ENCODE measurements at regions of chr17 and their contacts with region 1.

Region 1: GRCh38 chr17:13230350-13231264 is 212.8 kb upstream of the ELAC2 start:
- DNase-seq: peak; percentile 34
- H3K4me3 ChIP-seq: no peak overlapping the region
- H3K27ac ChIP-seq: no peak overlapping the region
- H3K4me1 ChIP-seq: no peaks in the 10 kb centered on the region
- H3K27me3 ChIP-seq: no peaks in the 10 kb centered on the region
- CTCF ChIP-seq: no peak

Region 2: DNA sequence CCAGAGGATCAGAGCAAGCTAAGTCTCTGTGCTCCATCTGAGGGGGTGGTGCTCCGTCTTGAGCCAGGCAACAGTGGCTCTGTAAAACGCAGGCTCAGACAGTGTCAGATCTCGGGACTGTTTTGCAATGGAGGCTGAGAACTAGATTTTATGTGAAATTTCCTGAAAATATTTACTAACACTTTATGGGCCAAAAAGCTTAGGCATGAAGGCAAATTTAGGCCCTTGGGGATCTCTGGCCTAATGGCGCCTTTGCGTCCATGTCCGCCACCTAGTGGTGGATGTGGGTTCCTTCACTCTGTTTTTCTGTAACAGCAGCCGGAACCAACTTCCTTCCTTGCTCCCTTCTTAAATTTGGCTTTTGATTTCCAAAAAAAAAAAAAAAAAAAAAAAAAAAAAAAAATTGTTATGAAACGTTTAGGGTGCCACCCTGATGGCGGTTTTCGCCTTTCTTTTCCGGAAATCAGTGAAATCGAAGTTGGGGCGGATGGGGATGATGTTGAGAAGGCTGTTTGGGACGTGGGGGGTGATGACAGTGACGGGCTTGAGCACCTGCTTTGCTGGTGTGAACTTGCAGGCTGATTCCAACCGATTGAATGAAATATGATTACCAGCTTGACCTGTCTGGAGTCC is 198.8 kb before region 1 on chr17:
- CTCF ChIA-PET with region 1: no interaction called
- dilution Hi-C with region 1: no loop called
- in situ Hi-C with region 1: no loop called
- intact Hi-C with region 1: loop called (anchors 1 kb)
- DNase-seq: peak; percentile 14
- H3K4me3 ChIP-seq: no peak overlapping the region
- H3K27ac ChIP-seq: no peak overlapping the region
- H3K4me1 ChIP-seq: no peaks in the 10 kb centered on the region
- H3K27me3 ChIP-seq: peaks cover 2% of the 10 kb centered on the region
- CTCF ChIP-seq: peak; percentile 85 to 89

Region 3: DNA sequence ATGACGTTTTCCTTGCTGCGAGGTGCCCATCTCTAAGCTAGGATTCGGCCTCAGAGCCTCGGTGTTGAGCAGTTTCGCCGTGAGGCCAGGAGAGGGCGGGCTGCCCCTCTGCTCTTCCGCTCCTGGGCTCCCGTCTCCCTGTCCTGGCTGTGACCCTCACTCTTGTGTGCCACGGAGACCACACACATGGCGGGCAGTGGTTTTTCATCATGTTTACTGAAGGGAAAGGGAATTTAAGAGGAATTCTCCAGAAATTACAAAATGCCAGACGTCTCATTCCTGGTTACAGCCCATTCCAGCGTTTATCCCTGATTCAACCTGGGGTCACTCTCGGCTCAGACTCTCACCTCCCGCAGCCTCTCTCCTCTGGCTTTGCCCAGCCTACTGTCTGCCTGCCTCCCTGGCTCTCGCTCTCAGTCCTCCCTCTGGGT is 116.0 kb before region 1 on chr17:
- CTCF ChIA-PET with region 1: no interaction called
- dilution Hi-C with region 1: no loop called
- in situ Hi-C with region 1: no loop called
- intact Hi-C with region 1: loop called (anchors 1 kb)
- DNase-seq: peak; percentile 6
- H3K4me3 ChIP-seq: no peak overlapping the region
- H3K27ac ChIP-seq: no peak overlapping the region
- H3K4me1 ChIP-seq: no peaks in the 10 kb centered on the region
- H3K27me3 ChIP-seq: no peaks in the 10 kb centered on the region
- CTCF ChIP-seq: peak; percentile 34 to 56

Region 4: DNA sequence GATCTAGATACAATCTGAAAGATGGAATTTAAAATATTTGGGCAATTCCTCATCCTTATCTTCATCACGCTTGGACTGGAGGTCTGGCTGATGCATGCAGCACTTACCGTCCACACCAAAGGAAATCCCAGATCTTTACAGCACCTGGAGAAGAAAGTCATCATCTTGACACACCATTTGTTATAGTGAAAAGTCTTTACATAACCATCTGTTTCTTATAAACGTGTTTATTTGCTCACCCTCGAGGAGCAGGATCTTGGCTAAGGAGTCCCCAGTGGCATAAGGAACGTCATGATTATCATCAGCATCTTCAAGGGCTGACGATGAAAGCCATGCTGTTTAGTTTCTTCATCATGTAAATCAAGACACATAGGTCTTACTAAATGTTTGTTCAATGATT is 36.0 kb after region 1 on chr17:
- CTCF ChIA-PET with region 1: no interaction called
- dilution Hi-C with region 1: no loop called
- in situ Hi-C with region 1: no loop called
- intact Hi-C with region 1: no loop called
- DNase-seq: no peak
- H3K4me3 ChIP-seq: no peak overlapping the region
- H3K27ac ChIP-seq: no peak overlapping the region
- H3K4me1 ChIP-seq: no peaks in the 10 kb centered on the region
- H3K27me3 ChIP-seq: no peaks in the 10 kb centered on the region
- CTCF ChIP-seq: no peak

Measured in mammary epithelial cell (primary cell).